PC-3 (cell line): ENCODE measurements at regions of chr3 and their contacts with region 1.

Region 1: DNA sequence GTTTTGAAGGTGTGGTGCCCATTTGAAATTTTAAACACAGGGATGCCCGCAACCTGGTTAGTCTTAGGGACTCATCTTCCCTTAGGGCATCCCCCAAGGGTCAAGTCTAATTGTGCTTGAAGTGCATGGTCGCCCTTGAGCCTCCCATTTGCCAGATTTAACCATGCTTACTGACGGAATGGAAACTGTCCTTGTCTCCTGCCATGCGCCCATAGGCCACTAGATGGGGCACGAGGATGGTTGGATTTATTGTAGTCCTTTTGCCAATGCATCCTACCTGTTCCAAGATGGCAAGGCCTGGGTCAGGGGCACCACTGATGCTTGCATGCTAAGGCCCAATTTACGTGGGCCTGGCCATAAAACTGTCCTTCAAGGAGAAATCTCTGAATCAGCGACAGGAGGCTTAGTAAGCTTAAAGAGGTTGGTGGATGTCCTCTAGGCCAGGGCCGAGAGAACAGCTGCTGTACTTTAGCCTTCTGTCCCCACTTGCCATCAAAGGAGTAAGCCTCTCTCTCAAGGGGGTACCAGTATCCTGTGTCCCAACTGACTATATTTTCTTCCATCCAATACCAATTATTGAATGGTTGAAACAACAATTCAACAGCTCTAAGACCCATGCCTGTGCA is 355.4 kb downstream of the OTOL1 start:
- DNase-seq: peak; percentile 87
- ATAC-seq: 0 out of 2 replicates have a peak, but pooled peaks have one; percentile 8
- H3K4me3 ChIP-seq: no peak overlapping the region
- H3K27ac ChIP-seq: no peak overlapping the region
- H3K4me1 ChIP-seq: peaks cover 23% of the 10 kb centered on the region
- H3K27me3 ChIP-seq: no peaks in the 10 kb centered on the region
- CTCF ChIP-seq: peak; percentile 85

Region 2: DNA sequence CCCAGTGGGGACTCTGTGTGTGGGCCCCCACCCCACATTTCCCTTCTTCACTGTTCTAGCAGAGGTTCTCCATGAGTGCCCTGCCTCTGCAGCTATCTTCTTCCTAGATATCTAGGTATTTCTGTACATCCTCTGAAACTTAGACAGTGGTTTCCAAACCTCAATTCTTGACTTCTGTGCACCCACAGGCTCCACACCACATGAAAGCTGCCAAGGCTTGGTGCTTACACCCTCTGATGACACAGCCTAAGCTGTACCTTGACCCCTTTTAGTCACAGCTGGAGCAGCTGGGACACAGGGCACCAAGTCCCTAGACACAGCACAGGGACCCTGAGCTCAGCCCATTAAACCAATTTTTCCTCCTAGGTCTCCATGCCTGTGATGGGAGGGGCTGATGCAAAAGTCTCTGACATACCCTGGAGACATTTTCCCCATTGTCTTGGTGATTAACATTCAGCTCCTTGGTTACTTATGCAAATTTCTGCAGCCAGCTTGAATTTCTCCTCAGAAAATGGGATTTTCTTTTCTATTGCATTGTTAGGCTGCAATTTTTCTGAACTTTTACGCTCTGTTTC is 51.0 kb before region 1 on chr3:
- CTCF ChIA-PET with region 1: no interaction called
- POLR2A ChIA-PET with region 1: no interaction called
- intact Hi-C with region 1: no loop called
- DNase-seq: no peak
- ATAC-seq: no peak
- H3K4me3 ChIP-seq: no peak overlapping the region
- H3K27ac ChIP-seq: no peak overlapping the region
- H3K4me1 ChIP-seq: no peaks in the 10 kb centered on the region
- H3K27me3 ChIP-seq: no peaks in the 10 kb centered on the region
- CTCF ChIP-seq: no peak

Region 3: DNA sequence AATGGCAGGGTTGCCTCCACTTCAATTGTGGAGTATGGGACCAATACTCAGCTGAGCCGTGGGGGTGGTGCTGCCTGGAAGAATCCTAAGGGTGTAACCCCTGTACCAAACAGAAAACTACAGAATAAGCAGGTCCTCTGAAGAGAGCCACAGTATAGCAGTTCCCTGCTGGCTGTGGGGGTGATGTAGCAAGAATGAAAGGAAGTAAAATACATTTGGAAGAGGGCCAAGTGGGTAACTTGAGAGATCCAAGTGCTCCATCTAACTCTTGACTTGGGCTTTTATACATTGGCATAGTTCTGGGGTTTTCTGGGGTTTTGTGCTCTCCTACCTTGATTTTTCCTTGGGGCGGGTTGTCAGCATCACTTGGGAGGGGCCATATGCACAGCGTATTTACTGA is 14.0 kb before region 1 on chr3:
- CTCF ChIA-PET with region 1: no interaction called
- POLR2A ChIA-PET with region 1: no interaction called
- intact Hi-C with region 1: no loop called
- DNase-seq: no peak
- ATAC-seq: no peak
- H3K4me3 ChIP-seq: no peak overlapping the region
- H3K27ac ChIP-seq: no peak overlapping the region
- H3K4me1 ChIP-seq: no peaks in the 10 kb centered on the region
- H3K27me3 ChIP-seq: no peaks in the 10 kb centered on the region
- CTCF ChIP-seq: no peak

Region 4: GRCh38 chr3:161914737-161915417 is 62.8 kb after region 1 on chr3:
- CTCF ChIA-PET with region 1: interaction called, 6 read pairs
- POLR2A ChIA-PET with region 1: no interaction called
- intact Hi-C with region 1: loop called (anchors 1 kb)
- DNase-seq: peak; percentile 77
- ATAC-seq: peak; percentile 82
- H3K4me3 ChIP-seq: peak overlapping the region; percentile 27; the same call in 1 of the 2 replicates
- H3K27ac ChIP-seq: peak overlapping the region; percentile 74
- H3K4me1 ChIP-seq: peaks cover 30% of the 10 kb centered on the region
- H3K27me3 ChIP-seq: no peaks in the 10 kb centered on the region
- CTCF ChIP-seq: peak; percentile 79

Region 5: DNA sequence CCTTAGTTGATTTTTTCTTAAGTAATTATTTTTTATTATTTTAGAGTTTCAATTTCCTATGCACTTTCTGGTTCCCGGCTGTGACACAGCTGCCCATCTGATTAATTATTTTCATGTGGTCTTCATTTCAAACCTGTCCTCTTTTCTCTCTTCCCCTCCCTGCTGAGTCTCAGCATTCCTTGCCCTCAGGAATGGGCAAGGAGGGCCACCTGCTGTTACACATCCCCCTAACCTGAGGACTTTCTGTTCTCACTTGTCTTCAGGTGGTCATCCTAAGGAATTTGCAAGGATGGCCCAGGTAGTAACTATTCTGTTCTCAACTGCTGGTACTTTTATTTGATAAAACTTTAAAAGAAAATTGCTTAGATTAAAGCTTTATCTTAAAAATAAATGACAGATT is 189.6 kb after region 1 on chr3:
- CTCF ChIA-PET with region 1: no interaction called
- POLR2A ChIA-PET with region 1: no interaction called
- intact Hi-C with region 1: loop called (anchors 5 kb)
- DNase-seq: no peak
- ATAC-seq: peak; percentile 42; the same call in 1 of the 2 replicates
- H3K4me3 ChIP-seq: no peak overlapping the region
- H3K27ac ChIP-seq: no peak overlapping the region
- H3K4me1 ChIP-seq: no peaks in the 10 kb centered on the region
- H3K27me3 ChIP-seq: no peaks in the 10 kb centered on the region
- CTCF ChIP-seq: 0 out of 2 replicates have a peak, but pooled peaks have one; percentile 12

Region 6: DNA sequence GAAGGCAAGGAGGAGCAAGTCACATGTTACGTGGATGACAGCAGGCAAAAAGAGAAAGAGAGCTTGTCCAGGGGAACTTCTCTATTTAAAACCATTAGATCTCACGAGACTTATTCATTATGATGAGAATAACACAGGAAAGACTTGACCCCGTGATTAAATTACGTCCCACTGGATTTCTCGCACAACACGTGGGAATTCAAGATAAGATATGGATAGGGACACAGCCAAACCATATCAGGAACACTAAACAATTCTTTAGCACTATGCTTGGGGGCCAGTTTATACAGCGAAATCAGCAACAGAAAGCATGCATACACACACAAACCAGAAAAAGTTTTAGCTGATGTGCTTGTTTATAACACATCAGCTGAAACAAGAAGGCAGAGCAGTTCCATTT is 348.8 kb after region 1 on chr3:
- CTCF ChIA-PET with region 1: no interaction called
- POLR2A ChIA-PET with region 1: no interaction called
- intact Hi-C with region 1: no loop called
- DNase-seq: no peak
- ATAC-seq: no peak
- H3K4me3 ChIP-seq: no peak overlapping the region
- H3K27ac ChIP-seq: no peak overlapping the region
- H3K4me1 ChIP-seq: no peaks in the 10 kb centered on the region
- H3K27me3 ChIP-seq: no peaks in the 10 kb centered on the region
- CTCF ChIP-seq: no peak

Region 7: DNA sequence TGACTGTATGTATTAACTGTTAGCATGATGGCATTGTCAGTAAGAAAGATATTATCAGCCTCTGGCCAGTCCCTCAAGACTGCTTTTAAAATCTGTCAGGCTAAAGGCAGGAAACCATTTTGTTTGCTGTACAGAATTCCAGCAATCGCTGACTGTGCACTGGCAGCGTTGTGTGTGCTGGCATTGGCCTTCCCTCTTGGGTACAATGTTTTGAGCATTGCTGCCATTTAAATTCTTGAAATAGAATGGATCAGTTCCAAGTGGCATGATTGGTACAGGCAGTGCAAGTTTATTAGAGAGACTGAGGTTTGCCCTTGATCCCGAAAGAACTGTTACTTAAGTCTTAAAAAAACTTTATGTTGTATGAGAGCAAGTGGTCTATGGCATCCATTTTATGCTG is 433.2 kb after region 1 on chr3:
- CTCF ChIA-PET with region 1: interaction called, 3 read pairs
- POLR2A ChIA-PET with region 1: no interaction called
- intact Hi-C with region 1: loop called (anchors 1 kb)
- DNase-seq: no peak
- ATAC-seq: no peak
- H3K4me3 ChIP-seq: no peak overlapping the region
- H3K27ac ChIP-seq: no peak overlapping the region
- H3K4me1 ChIP-seq: peaks cover 16% of the 10 kb centered on the region
- H3K27me3 ChIP-seq: no peaks in the 10 kb centered on the region
- CTCF ChIP-seq: no peak

Region 8: DNA sequence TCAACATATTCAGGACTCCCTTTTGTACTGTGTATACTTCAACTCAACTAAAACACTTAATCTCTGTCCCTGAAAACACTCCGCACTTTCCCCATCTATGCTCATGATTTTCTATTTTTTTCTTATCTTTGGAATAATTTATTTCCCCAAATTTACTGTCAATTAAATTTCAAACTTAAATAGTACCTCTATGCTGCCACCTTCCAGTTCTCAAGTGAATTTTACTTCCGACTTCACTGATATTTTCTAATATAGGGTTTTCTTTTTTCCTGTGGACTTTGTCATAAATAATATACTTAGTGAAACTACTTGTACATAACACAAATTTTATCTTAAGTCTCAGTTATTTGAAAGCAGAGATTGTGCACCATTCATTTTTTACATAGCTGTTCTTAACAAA is 947.9 kb after region 1 on chr3:
- CTCF ChIA-PET with region 1: no interaction called
- POLR2A ChIA-PET with region 1: no interaction called
- intact Hi-C with region 1: loop called (anchors 5 kb)
- DNase-seq: peak; percentile 10
- ATAC-seq: no peak
- H3K4me3 ChIP-seq: no peak overlapping the region
- H3K27ac ChIP-seq: no peak overlapping the region
- H3K4me1 ChIP-seq: no peaks in the 10 kb centered on the region
- H3K27me3 ChIP-seq: no peaks in the 10 kb centered on the region
- CTCF ChIP-seq: peak; percentile 56